GM12878 (cell line): ENCODE measurements at regions of chr9 and their contacts with region 1.

Region 1: GRCh38 chr9:15837079-15837679 is 284.3 kb downstream of the CCDC171 start:
- DNase-seq: peak; percentile 7
- ATAC-seq: peak; percentile 87
- H3K4me3 ChIP-seq: no peak overlapping the region
- H3K27ac ChIP-seq: no peak overlapping the region
- H3K4me1 ChIP-seq: no peaks in the 10 kb centered on the region
- H3K27me3 ChIP-seq: no peaks in the 10 kb centered on the region
- CTCF ChIP-seq: peak; percentile 67 to 74 (median 71)
- EP300 ChIP-seq: no peak
- POLR2A ChIP-seq: no peak
- RAD21 ChIP-seq: peak; percentile 58

Region 2: DNA sequence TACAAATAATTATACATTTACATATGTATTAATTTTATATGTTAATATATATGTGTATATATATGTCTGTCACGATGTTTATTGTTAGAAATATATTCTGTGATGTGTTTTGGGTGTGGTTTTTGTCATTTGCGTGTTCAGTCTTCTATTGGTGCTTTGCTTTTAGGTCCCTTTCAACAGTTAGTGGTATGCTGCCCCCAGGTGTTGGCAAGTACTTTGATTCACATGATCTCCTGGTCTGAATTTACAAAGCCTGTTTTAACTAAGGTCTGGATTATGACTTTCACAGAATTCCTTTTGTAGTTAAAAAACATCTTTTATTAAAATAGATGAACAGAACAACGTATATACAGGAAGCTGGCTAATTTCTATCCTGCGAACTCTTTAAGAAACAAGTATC is 12.9 kb before region 1 on chr9:
- CTCF ChIA-PET with region 1: interaction called, 15 read pairs
- POLR2A ChIA-PET with region 1: no interaction called
- RAD21 ChIA-PET with region 1: no interaction called
- SMC1A ChIA-PET with region 1: no interaction called
- in situ Hi-C with region 1: no loop called
- intact Hi-C with region 1: no loop called
- DNase-seq: no peak
- ATAC-seq: 0 out of 3 replicates have a peak, but pooled peaks have one; percentile 18
- H3K4me3 ChIP-seq: no peak overlapping the region
- H3K27ac ChIP-seq: no peak overlapping the region
- H3K4me1 ChIP-seq: no peaks in the 10 kb centered on the region
- H3K27me3 ChIP-seq: no peaks in the 10 kb centered on the region
- CTCF ChIP-seq: no peak
- EP300 ChIP-seq: no peak
- POLR2A ChIP-seq: no peak
- RAD21 ChIP-seq: 0 out of 2 replicates have a peak, but pooled peaks have one; percentile 10

Region 3: GRCh38 chr9:15977438-15977837 is 140.3 kb after region 1 on chr9:
- CTCF ChIA-PET with region 1: no interaction called
- POLR2A ChIA-PET with region 1: no interaction called
- RAD21 ChIA-PET with region 1: no interaction called
- SMC1A ChIA-PET with region 1: no interaction called
- in situ Hi-C with region 1: no loop called
- intact Hi-C with region 1: no loop called
- DNase-seq: no peak
- ATAC-seq: no peak
- H3K4me3 ChIP-seq: no peak overlapping the region
- H3K27ac ChIP-seq: no peak overlapping the region
- H3K4me1 ChIP-seq: no peaks in the 10 kb centered on the region
- H3K27me3 ChIP-seq: no peaks in the 10 kb centered on the region
- CTCF ChIP-seq: no peak
- EP300 ChIP-seq: no peak
- POLR2A ChIP-seq: no peak
- RAD21 ChIP-seq: no peak

Region 4: DNA sequence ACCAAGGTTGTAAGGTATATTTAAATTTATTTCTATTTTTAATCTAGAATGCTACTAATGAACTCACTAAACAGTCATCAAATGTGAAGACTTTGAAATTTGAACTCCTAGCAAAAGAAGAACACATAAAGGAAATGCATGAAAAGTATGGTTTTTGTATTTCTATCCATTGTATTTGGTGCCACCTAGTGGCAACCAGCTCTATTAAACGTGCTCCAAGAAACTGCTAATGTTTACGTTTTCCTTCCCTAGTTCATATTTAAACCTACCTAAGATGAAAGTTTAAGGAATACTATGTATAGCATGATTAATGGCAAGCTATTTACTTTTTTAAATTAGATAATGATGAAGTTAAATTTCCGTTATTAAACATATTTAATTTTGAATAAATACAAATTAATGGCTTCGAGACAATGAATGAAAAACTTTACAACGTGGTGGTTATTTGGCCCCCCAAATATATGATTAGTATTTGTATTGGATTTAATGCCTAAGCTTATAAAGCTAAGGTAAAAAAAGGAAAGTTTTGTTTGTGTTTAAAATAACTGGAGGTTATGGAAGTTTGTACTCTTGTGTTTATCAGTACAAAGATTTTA is 1625.8 kb after region 1 on chr9:
- CTCF ChIA-PET with region 1: no interaction called
- POLR2A ChIA-PET with region 1: no interaction called
- RAD21 ChIA-PET with region 1: no interaction called
- SMC1A ChIA-PET with region 1: no interaction called
- in situ Hi-C with region 1: no loop called
- intact Hi-C with region 1: loop called (anchors 10 kb)
- DNase-seq: no peak
- ATAC-seq: peak; percentile 66
- H3K4me3 ChIP-seq: no peak overlapping the region
- H3K27ac ChIP-seq: no peak overlapping the region
- H3K4me1 ChIP-seq: no peaks in the 10 kb centered on the region
- H3K27me3 ChIP-seq: no peaks in the 10 kb centered on the region
- CTCF ChIP-seq: peak; percentile 55 to 73 (median 58); a peak in 5 of 6 replicates
- EP300 ChIP-seq: no peak
- POLR2A ChIP-seq: no peak
- RAD21 ChIP-seq: peak; percentile 81